Activated T-helper 2 cell treated with anti-CD3 and anti-CD28 coated beads, Interferon-gamma antibody, Interleukin-2, Interleukin-4, amounts not matched to agents 10 μg/mL and 5 μg/mL and 100 μg/mL, durations not matched to agents 14 hours and 24 hours and 36 hours (primary cell): ENCODE measurements at regions of chr10 and their contacts with region 1.

Region 1: DNA sequence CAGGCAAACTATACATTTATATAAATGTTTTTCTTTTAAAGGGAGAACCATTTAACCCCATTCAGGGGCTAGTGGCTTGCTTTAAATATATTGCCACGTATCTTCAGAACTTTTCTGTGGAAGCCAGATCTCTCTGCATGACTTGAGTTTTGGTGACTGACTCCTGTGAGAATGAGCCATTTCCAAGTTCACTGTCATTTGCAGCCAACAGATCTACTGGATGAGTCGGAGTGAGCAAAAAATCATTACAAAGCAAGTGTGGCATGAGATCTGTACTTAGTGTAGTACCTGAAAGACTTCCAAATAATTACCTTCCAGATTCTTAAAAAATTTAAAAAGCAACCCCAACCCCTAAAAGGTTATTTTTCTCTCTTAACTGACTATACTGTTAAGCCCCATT is 45.6 kb downstream of the PDSS1 start:
- DNase-seq: no peak
- H3K4me3 Mint-ChIP-seq: no peak overlapping the region
- H3K27ac Mint-ChIP-seq: peak overlapping the region; percentile 82
- H3K4me1 Mint-ChIP-seq: peaks cover 47% of the 10 kb centered on the region
- H3K27me3 Mint-ChIP-seq: no peaks in the 10 kb centered on the region

Region 2: DNA sequence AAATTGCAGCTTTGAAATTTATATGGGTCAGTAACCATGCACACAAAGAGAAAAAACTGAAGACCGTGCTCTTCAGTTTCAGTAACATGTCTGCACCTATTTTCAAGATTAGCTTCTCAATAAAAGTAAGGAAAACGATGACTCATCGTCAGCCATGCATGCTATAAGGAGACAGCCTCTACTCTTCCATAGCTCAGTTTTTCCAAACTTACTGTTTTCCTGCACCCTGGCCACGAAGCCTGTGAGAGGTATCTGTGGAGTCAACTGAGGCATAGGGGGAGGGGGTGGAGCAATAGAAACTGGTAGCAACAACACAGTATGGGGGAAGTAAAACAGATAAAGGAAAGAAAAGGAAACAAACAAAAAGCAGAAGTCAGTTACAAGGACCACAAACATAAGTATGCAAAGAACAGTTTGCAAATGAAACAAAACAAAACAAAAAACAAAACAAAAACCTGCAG is 12.4 kb after region 1 on chr10:
- intact Hi-C with region 1: loop called (anchors 1 kb)
- DNase-seq: no peak
- H3K4me3 Mint-ChIP-seq: no peak overlapping the region
- H3K27ac Mint-ChIP-seq: peak overlapping the region; percentile 72
- H3K4me1 Mint-ChIP-seq: peaks cover 14% of the 10 kb centered on the region
- H3K27me3 Mint-ChIP-seq: no peaks in the 10 kb centered on the region

Region 3: DNA sequence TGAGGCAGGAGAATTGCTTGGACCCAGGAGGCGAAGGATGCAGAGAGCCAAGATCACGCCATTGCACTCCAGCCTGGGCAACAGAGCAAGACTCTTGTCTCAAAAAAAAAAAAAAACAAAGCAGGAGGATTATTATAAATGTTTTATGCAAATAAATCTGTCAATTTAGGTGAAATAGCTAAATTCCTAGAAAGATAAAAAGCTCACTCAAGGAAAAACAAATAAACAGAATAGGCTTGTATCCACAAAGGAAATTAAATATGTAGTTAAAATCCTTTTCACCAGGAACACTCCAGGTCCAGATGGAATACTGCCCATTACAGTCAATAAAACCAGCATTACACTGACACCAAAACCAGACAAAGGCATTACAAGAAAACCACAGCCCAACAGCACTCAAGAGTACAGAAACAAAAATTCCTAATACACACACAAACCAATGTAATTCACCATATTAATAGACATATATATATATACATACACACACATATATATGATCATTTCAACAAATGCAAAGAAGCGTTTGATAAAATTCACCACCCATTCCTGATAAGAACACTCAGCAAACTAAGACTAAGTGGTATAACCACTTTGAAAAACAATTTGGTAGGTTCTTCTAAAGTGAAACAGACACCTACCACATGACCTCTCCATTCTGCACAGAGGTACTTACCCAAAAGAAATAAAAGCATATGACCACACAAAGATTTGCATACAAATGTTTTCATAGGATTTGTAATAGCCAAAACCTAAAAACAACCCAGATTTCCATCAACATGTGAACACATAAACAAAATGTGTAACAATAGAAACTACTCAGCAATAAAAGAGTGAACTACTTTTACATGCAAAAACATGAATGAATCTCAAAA is 78.8 kb after region 1 on chr10:
- intact Hi-C with region 1: no loop called
- DNase-seq: no peak
- H3K4me3 Mint-ChIP-seq: no peak overlapping the region
- H3K27ac Mint-ChIP-seq: peak overlapping the region; percentile 40
- H3K4me1 Mint-ChIP-seq: peaks cover 26% of the 10 kb centered on the region
- H3K27me3 Mint-ChIP-seq: no peaks in the 10 kb centered on the region